Activated CD8-positive, alpha-beta T cell treated with anti-CD3 and anti-CD28 coated beads, Interleukin-2, amount 10 ng/mL, durations not matched to agents 7 days and 5 days (primary cell): ENCODE measurements at regions of chr11 and their contacts with region 1.

Region 1: DNA sequence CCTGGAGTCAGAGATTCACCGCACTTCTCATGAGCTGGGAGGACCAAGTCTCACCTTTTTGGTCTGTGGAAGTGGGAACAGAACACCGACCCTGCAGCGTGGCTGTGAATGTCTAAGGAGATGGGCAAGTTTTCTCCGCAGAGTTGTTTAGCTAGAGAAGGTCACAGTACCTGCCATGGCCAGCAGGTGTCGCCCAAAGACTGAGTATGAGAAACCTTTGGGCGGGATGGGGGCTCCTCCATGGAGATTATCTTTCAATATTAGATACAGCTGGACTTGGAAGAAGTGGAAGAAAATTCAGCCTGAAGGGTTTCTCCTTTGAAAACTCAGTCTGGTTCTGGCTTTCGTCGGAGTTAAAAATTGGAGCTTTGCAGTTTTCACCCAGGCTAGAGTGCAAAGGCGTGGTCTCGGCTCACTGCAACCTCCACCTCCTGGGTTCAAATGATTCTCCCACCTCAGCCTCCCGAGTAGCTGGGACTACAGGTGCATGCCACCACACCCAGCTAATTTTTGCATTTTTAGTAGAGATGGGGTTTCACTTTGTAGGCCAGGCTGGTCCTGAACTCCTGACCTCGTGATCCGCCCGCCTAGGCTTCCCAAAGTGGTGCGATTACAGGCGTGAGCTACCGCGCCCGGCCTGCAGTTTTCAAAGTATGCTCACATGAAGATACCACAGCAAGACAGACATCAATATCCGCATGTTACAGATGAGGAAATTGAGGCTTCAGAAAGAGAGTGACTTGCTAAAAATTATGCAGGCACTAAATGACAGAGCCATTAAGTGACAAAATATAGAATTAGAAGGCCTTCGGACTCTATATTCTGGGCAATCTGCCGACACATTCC is 10.7 kb upstream of the DSCAML1 start:
- DNase-seq: peak; percentile 86
- ATAC-seq: peak; percentile 66
- H3K4me3 Mint-ChIP-seq: no peak overlapping the region
- H3K27ac Mint-ChIP-seq: no peak overlapping the region
- H3K4me1 Mint-ChIP-seq: peaks cover 25% of the 10 kb centered on the region
- H3K27me3 Mint-ChIP-seq: no peaks in the 10 kb centered on the region

Region 2: GRCh38 chr11:117426269-117426685 is 381.4 kb before region 1 on chr11:
- CTCF ChIA-PET with region 1: interaction called, 54 read pairs
- POLR2A ChIA-PET with region 1: no interaction called
- DNase-seq: peak; percentile 72
- ATAC-seq: peak; percentile 56
- H3K4me3 Mint-ChIP-seq: no peak overlapping the region
- H3K27ac Mint-ChIP-seq: no peak overlapping the region
- H3K4me1 Mint-ChIP-seq: peaks cover 5% of the 10 kb centered on the region
- H3K27me3 Mint-ChIP-seq: no peaks in the 10 kb centered on the region

Region 3: GRCh38 chr11:117828611-117829368 is 21.1 kb after region 1 on chr11:
- CTCF ChIA-PET with region 1: interaction called, 404 read pairs
- POLR2A ChIA-PET with region 1: interaction called, 3 read pairs
- DNase-seq: peak; percentile 92
- ATAC-seq: peak; percentile 88
- H3K4me3 Mint-ChIP-seq: peak overlapping the region; percentile 48
- H3K27ac Mint-ChIP-seq: peak overlapping the region; percentile 90
- H3K4me1 Mint-ChIP-seq: peaks cover 83% of the 10 kb centered on the region
- H3K27me3 Mint-ChIP-seq: no peaks in the 10 kb centered on the region

Region 4: DNA sequence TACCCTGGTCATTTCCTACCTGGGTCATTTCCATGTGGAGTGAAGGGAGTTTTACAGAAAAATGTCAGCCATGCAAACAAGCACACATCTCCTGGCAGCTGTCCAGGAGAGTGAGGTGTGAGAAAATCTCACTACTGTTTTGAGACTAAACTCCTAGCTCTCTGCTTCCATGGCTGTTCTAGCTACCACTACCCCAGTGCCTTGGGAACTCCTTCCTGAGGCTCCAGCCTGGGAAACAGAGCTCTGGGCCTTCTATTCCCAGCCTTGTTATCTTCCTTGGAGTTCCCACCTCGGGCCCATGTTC is 124.3 kb after region 1 on chr11:
- CTCF ChIA-PET with region 1: interaction called, 26 read pairs
- POLR2A ChIA-PET with region 1: no interaction called
- DNase-seq: peak; percentile 47
- ATAC-seq: no peak
- H3K4me3 Mint-ChIP-seq: no peak overlapping the region
- H3K27ac Mint-ChIP-seq: peak overlapping the region; percentile 93
- H3K4me1 Mint-ChIP-seq: peaks cover 83% of the 10 kb centered on the region
- H3K27me3 Mint-ChIP-seq: no peaks in the 10 kb centered on the region

Region 5: DNA sequence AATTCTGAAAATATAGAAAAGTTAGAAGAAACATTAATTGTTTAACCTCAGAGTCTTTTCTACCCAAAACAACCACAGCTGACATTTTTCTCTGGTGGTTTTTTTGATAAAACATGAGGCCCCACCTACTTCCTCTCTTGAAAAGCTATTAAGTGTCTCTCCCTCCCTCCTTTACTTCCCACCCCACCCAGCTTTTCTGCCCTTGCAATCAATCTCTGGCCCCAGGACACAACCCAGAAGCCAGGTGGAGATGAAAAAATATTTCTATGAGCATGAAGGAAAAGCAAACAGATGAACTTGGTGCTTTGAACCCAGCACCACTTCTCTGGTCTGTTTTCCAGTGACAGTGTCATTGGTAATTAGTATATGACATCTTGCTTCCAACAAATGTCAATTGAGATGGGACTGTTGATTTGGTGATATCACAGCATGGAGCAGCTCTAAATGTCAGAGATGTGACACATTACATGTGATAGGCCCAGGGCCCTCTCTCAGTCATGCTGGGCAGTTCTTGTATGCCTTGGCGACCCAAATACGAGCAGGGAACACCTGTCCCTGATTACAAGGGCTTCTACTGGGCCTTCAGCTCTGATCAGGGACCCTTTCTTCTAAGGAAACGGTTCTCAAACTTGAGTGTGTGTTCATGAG is 145.4 kb after region 1 on chr11:
- CTCF ChIA-PET with region 1: interaction called, 124 read pairs
- POLR2A ChIA-PET with region 1: no interaction called
- DNase-seq: peak; percentile 60
- ATAC-seq: peak; percentile 12
- H3K4me3 Mint-ChIP-seq: peak overlapping the region; percentile 55
- H3K27ac Mint-ChIP-seq: peak overlapping the region; percentile 90
- H3K4me1 Mint-ChIP-seq: peaks cover 78% of the 10 kb centered on the region
- H3K27me3 Mint-ChIP-seq: no peaks in the 10 kb centered on the region

Region 6: DNA sequence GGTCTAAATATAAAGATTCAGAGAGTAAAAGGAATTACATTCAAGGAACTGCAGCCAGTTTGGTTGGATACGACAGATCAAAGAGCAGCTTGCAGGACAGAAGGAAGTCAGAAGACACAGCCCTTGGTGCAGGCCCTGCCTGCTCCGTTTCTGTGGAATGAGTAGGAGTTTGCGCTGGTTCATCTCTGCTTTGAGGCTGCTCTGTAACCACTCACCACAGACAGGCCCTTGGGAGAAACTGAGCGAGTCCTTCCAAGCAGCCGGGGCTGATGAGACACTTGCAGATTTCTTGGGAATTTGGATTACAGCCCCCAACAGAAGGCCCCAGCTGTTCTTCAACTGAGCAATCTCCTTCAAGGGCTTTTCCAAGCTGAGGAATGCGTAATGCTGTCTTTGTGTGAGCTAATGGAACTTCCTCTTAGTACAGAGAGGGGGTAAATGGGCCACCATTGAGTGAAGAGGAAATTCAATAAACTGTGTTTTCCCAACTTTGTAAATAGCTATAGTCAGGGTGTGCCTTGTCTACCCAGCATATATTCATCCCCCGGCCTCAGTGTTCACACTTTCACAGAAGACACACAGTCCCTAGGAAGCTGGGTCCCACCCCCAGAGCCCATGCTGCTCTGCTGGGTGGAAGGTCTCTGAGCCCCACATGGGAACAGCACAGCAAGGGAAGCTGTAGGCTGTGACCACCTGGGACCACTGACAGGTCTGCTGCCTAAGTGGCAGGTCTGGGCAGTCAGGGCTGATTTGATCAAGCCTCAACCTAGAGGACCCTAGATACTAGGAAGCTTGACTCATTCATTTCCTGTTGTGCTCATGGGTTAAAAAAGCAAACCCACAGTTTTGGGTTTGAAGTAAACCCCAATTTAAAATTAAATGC is 195.1 kb after region 1 on chr11:
- CTCF ChIA-PET with region 1: interaction called, 11 read pairs
- POLR2A ChIA-PET with region 1: no interaction called
- DNase-seq: peak; percentile 70
- ATAC-seq: peak; percentile 52
- H3K4me3 Mint-ChIP-seq: peak overlapping the region; percentile 72
- H3K27ac Mint-ChIP-seq: peak overlapping the region; percentile 98
- H3K4me1 Mint-ChIP-seq: peaks cover 100% of the 10 kb centered on the region
- H3K27me3 Mint-ChIP-seq: no peaks in the 10 kb centered on the region

Region 7: DNA sequence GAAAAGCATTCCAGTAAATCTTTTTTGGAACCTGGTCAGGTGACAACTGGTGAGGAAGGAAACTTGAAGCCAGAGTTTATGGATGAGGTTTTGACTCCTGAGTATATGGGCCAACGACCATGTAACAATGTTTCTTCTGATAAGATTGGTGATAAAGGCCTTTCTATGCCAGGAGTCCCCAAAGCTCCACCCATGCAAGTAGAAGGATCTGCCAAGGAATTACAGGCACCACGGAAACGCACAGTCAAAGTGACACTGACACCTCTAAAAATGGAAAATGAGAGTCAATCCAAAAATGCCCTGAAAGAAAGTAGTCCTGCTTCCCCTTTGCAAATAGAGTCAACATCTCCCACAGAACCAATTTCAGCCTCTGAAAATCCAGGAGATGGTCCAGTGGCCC is 695.5 kb after region 1 on chr11:
- CTCF ChIA-PET with region 1: no interaction called
- POLR2A ChIA-PET with region 1: no interaction called
- DNase-seq: no peak
- ATAC-seq: no peak
- H3K4me3 Mint-ChIP-seq: no peak overlapping the region
- H3K27ac Mint-ChIP-seq: no peak overlapping the region
- H3K4me1 Mint-ChIP-seq: no peaks in the 10 kb centered on the region
- H3K27me3 Mint-ChIP-seq: no peaks in the 10 kb centered on the region